ENCODE measurements at regions of chr5 and their contacts with region 1.

Region 1: DNA sequence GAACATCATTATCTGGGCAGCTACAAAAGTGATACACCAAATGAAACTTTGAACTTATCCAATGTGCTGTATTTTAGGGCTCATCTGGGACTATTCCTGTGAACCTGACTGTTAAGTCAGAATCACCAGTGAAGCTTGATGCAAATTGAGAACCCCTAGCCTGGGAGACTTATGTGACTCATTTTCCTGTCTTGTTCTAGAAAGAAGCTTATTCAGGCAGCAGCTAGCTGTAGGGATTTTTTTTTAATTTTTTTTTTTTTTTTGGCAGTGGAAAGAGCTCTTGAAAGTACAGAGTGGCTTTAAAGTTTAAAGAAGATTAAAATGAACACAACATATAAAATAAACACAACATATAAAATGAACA is 81.1 kb upstream of the TNFAIP8 start:
- DNase-seq: no peak
- H3K4me3 Mint-ChIP-seq: peak overlapping the region; percentile 78
- H3K27ac Mint-ChIP-seq: peak overlapping the region; percentile 99
- H3K4me1 Mint-ChIP-seq: peaks cover 88% of the 10 kb centered on the region
- H3K27me3 Mint-ChIP-seq: peaks cover 1% of the 10 kb centered on the region

Region 2: GRCh38 chr5:119031905-119032304 is 242.8 kb before region 1 on chr5:
- CTCF ChIA-PET with region 1: no interaction called
- POLR2A ChIA-PET with region 1: no interaction called
- intact Hi-C with region 1: loop called (anchors 2 kb)
- DNase-seq: peak; percentile 35
- H3K4me3 Mint-ChIP-seq: no peak overlapping the region
- H3K27ac Mint-ChIP-seq: peak overlapping the region; percentile 54
- H3K4me1 Mint-ChIP-seq: peaks cover 22% of the 10 kb centered on the region
- H3K27me3 Mint-ChIP-seq: no peaks in the 10 kb centered on the region

Region 3: DNA sequence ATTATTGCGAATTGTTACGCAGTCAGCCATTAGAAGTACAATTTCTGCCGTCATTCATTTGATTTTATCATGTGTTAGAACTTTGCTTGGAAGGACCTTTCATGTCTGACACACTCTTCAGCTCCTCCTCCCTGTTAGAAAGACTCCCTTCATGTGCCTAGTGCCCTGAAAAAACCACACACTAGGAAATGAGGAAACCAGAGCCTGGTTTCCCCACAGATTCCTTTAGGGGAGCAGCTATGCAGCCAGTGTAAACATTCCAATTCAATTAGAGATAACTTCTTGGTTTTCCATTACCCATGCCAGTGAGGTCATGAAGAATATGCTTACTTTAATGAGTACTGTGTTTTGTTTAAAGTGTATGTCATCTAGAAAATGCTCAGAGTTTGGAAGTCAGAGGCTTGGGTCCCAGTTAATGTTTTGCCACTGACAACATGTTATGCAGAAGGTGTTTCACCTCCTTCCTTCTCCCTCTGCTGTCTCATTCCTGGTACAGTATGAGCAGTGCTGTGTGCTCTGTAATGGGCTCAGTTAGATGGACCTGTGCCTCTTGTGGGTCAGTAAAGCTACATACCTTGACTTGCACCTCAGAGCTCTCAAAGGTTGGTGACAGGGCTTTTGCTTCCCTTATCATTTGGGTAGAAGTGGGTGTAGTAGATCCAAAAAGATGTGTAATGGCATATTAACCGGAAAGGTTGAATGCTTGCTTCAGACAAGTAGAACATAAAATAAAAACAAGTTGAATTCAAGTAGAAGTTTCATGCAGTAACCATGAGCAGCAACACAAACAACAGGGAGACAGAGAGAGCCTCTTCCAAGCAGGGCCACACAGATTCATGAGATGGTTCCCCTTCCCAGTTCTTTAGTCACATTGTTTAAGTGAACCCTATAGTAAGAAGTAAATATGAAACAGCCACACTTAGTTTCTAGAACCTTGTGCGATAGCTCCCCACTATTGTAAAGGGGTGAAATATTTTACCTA is 28.5 kb after region 1 on chr5:
- CTCF ChIA-PET with region 1: interaction called, 6 read pairs
- POLR2A ChIA-PET with region 1: interaction called, 6 read pairs
- intact Hi-C with region 1: loop called (anchors 1 kb)
- DNase-seq: no peak
- H3K4me3 Mint-ChIP-seq: peak overlapping the region; percentile 17
- H3K27ac Mint-ChIP-seq: peak overlapping the region; percentile 90
- H3K4me1 Mint-ChIP-seq: peaks cover 93% of the 10 kb centered on the region
- H3K27me3 Mint-ChIP-seq: no peaks in the 10 kb centered on the region

Region 4: GRCh38 chr5:119315516-119315949 is 40.8 kb after region 1 on chr5:
- CTCF ChIA-PET with region 1: interaction called, 14 read pairs
- POLR2A ChIA-PET with region 1: interaction called, 7 read pairs
- intact Hi-C with region 1: no loop called
- DNase-seq: peak; percentile 78
- H3K4me3 Mint-ChIP-seq: peak overlapping the region; percentile 30
- H3K27ac Mint-ChIP-seq: peak overlapping the region; percentile 89
- H3K4me1 Mint-ChIP-seq: peaks cover 93% of the 10 kb centered on the region
- H3K27me3 Mint-ChIP-seq: no peaks in the 10 kb centered on the region

Region 5: GRCh38 chr5:119340597-119341218 is 66.0 kb after region 1 on chr5:
- CTCF ChIA-PET with region 1: interaction called, 15 read pairs
- POLR2A ChIA-PET with region 1: interaction called, 8 read pairs
- intact Hi-C with region 1: loop called (anchors 1 kb)
- DNase-seq: peak; percentile 78
- H3K4me3 Mint-ChIP-seq: peak overlapping the region; percentile 66
- H3K27ac Mint-ChIP-seq: peak overlapping the region; percentile 93
- H3K4me1 Mint-ChIP-seq: peaks cover 94% of the 10 kb centered on the region
- H3K27me3 Mint-ChIP-seq: no peaks in the 10 kb centered on the region

Region 6: GRCh38 chr5:119367502-119368237 is 92.9 kb after region 1 on chr5:
- CTCF ChIA-PET with region 1: interaction called, 3 read pairs
- POLR2A ChIA-PET with region 1: interaction called, 6 read pairs
- intact Hi-C with region 1: loop called (anchors 1 kb)
- DNase-seq: no peak
- H3K4me3 Mint-ChIP-seq: peak overlapping the region; percentile 55
- H3K27ac Mint-ChIP-seq: peak overlapping the region; percentile 90
- H3K4me1 Mint-ChIP-seq: peaks cover 83% of the 10 kb centered on the region
- H3K27me3 Mint-ChIP-seq: no peaks in the 10 kb centered on the region